ENCODE measurements at regions of chr1 and their contacts with region 1.

Region 1: GRCh38 chr1:111222308-111223125 is 5.0 kb upstream of the CHI3L2 start:
- DNase-seq: peak; percentile 56 to 58
- ATAC-seq: peak; percentile 92 to 97
- H3K4me3 ChIP-seq: no peak overlapping the region
- H3K27ac ChIP-seq: no peak overlapping the region
- H3K4me1 ChIP-seq: peaks cover 2% of the 10 kb centered on the region; the same call in 2 of the 3 replicates
- CTCF ChIP-seq: peak; percentile 60
- EP300 ChIP-seq: no peak
- POLR2A ChIP-seq: no peak
- RAD21 ChIP-seq: peak; percentile 79 to 86

Region 2: GRCh38 chr1:111334169-111334568 is 111.7 kb after region 1 on chr1:
- CTCF ChIA-PET with region 1: interaction called, 16 read pairs
- POLR2A ChIA-PET with region 1: no interaction called
- DNase-seq: peak in 1 of 2 experiments; percentile 20
- ATAC-seq: peak in 1 of 2 experiments; percentile 46; a peak in 1 of 6 replicates
- H3K4me3 ChIP-seq: no peak overlapping the region
- H3K27ac ChIP-seq: no peak overlapping the region
- H3K4me1 ChIP-seq: no peaks in the 10 kb centered on the region
- CTCF ChIP-seq: peak; percentile 23; the same call in 1 of the 3 replicates
- EP300 ChIP-seq: no peak
- POLR2A ChIP-seq: no peak
- RAD21 ChIP-seq: peak; percentile 38 to 71; a peak in 3 of 5 replicates

Region 3: GRCh38 chr1:111399792-111400610 is 177.5 kb after region 1 on chr1:
- CTCF ChIA-PET with region 1: interaction called, 174 read pairs
- POLR2A ChIA-PET with region 1: interaction called, 3 read pairs
- DNase-seq: peak; percentile 18 to 33
- ATAC-seq: no peak
- H3K4me3 ChIP-seq: no peak overlapping the region
- H3K27ac ChIP-seq: no peak overlapping the region
- H3K4me1 ChIP-seq: no peaks in the 10 kb centered on the region
- CTCF ChIP-seq: peak; percentile 61
- EP300 ChIP-seq: no peak
- POLR2A ChIP-seq: no peak
- RAD21 ChIP-seq: peak; percentile 65 to 66